Mammary epithelial cell (primary cell): ENCODE measurements at regions of chr3 and their contacts with region 1.

Region 1: GRCh38 chr3:64873400-64873799 is 185.6 kb upstream of the ADAMTS9 start:
- DNase-seq: no peak
- H3K4me3 ChIP-seq: no peak overlapping the region
- H3K27ac ChIP-seq: no peak overlapping the region
- H3K4me1 ChIP-seq: peaks cover 6% of the 10 kb centered on the region
- H3K27me3 ChIP-seq: no peaks in the 10 kb centered on the region
- CTCF ChIP-seq: no peak

Region 2: GRCh38 chr3:64915778-64916177 is 42.4 kb after region 1 on chr3:
- CTCF ChIA-PET with region 1: no interaction called
- dilution Hi-C with region 1: loop called (anchors 5 kb)
- in situ Hi-C with region 1: no loop called
- intact Hi-C with region 1: no loop called
- DNase-seq: peak; percentile 86
- H3K4me3 ChIP-seq: no peak overlapping the region
- H3K27ac ChIP-seq: no peak overlapping the region
- H3K4me1 ChIP-seq: peaks cover 15% of the 10 kb centered on the region
- H3K27me3 ChIP-seq: no peaks in the 10 kb centered on the region
- CTCF ChIP-seq: no peak

Region 3: GRCh38 chr3:65371053-65371452 is 497.7 kb after region 1 on chr3:
- CTCF ChIA-PET with region 1: no interaction called
- dilution Hi-C with region 1: no loop called
- in situ Hi-C with region 1: no loop called
- intact Hi-C with region 1: no loop called
- DNase-seq: no peak
- H3K4me3 ChIP-seq: no peak overlapping the region
- H3K27ac ChIP-seq: no peak overlapping the region
- H3K4me1 ChIP-seq: no peaks in the 10 kb centered on the region
- H3K27me3 ChIP-seq: no peaks in the 10 kb centered on the region
- CTCF ChIP-seq: no peak